ENCODE measurements at regions of chr6 and their contacts with region 1.

Region 1: DNA sequence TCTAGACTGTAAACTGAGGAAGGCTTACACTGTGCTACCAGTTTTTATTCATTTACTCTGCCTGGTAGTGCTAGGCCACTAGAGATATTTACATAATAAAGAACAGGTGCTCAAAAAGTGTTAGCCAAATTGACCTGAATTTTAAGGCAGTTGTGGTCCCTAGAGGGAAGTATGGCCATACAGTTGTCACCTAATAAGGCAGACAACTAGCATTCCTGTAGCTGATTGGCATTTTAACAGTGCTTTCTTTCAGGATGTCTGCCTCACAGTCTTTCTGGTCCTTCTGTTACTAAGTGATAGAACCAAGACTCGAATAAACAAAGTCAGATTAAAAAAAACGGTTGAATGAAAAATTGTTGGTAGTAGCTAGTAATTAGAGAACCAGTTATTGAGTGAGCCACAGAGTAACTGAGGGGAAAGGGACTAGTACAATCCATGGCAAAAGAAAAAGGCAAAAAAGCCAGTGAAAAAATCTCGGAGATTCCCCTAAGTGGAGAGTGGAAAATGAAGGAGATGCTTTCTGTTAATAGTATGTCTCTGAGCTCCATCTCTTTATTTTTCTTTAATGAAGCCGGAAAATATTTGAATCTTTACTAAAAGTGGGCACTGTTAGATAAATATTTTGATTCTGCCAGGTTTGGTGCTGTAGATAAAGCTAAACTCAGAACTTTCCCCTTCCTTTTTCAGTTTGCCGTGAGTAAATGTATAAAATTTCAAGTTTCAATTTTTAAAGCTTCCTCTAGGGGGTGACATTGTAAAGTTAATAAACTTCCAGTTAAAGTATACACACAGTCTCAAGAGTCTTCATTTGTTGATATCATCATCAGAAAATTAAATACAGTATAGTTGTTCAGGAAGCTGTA is 9.1 kb downstream of the VTA1 start:
- DNase-seq: peak; percentile 27

Region 2: GRCh38 chr6:142088858-142089216 is 67.3 kb before region 1 on chr6:
- CTCF ChIA-PET with region 1: no interaction called
- POLR2A ChIA-PET with region 1: no interaction called
- DNase-seq: no peak

Region 3: GRCh38 chr6:142207265-142207877 is 51.2 kb after region 1 on chr6:
- CTCF ChIA-PET with region 1: interaction called, 10 read pairs
- POLR2A ChIA-PET with region 1: no interaction called
- DNase-seq: peak; percentile 72

Region 4: GRCh38 chr6:142222022-142222421 is 65.9 kb after region 1 on chr6:
- CTCF ChIA-PET with region 1: no interaction called
- POLR2A ChIA-PET with region 1: no interaction called
- DNase-seq: no peak

Measured in HEK293T (cell line).